ENCODE measurements at regions of chr1 and their contacts with region 1.

Region 1: DNA sequence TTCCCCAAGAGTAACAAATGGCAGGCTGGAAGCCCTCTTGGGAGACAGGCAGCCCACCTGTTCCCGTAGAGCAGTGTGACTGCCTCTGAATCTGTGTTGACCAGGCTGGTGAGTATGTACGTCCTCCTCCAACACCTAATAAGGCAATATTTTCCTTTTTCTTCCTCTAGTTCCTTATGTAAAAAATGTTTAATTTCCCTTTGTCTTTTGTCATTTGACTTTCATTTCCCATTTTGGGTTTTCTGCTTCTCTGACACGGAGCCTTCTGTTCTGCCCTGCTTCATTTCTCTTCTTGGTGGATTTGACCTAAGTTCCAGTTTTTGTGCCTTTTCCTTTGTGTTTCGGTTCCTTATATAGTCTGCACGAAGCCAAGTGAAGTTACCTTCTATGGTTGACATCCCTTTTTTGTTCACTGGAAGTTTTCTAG is 65.8 kb upstream of the ATF3 start:
- DNase-seq: no peak
- ATAC-seq: peak; percentile 34; the same call in 1 of the 3 replicates
- H3K4me3 ChIP-seq: no peak overlapping the region
- H3K27ac ChIP-seq: no peak overlapping the region
- H3K4me1 ChIP-seq: no peaks in the 10 kb centered on the region
- H3K27me3 ChIP-seq: no peaks in the 10 kb centered on the region
- CTCF ChIP-seq: no peak
- EP300 ChIP-seq: no peak
- POLR2A ChIP-seq: no peak
- RAD21 ChIP-seq: no peak

Region 2: DNA sequence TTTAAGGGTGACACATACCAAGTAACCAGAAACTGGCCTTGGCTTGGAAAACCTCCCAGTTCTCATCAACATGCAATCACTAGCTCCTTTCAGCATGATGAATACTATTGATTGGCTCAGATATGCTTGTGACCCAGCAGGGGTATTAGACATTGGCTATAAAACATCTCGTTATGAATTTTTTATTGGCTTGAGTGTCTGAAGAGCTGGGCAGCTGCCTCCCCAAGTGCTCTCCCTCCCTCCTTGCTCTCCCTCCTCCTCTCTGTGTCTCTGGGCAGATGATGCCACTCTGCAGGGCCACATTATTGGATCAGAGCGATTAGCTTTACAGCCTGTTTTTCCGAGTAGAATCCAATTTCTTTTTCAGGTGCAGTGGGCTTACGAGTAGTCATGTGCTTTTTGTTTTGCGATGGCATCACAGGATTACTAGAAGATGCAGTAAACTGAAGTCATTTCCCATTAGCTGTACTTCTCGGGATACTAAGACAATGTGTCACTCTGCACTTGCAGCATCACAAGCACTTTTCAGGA is 13.5 kb before region 1 on chr1:
- CTCF ChIA-PET with region 1: interaction called, 4 read pairs
- POLR2A ChIA-PET with region 1: interaction called, 10 read pairs
- RAD21 ChIA-PET with region 1: no interaction called
- SMC1A ChIA-PET with region 1: interaction called, 17 read pairs
- in situ Hi-C with region 1: no loop called
- intact Hi-C with region 1: no loop called
- DNase-seq: no peak
- ATAC-seq: no peak
- H3K4me3 ChIP-seq: no peak overlapping the region
- H3K27ac ChIP-seq: no peak overlapping the region
- H3K4me1 ChIP-seq: no peaks in the 10 kb centered on the region
- H3K27me3 ChIP-seq: no peaks in the 10 kb centered on the region; a peak in 1 of 4 replicates
- CTCF ChIP-seq: no peak
- EP300 ChIP-seq: no peak
- POLR2A ChIP-seq: no peak
- RAD21 ChIP-seq: no peak